Activated CD8-positive, alpha-beta T cell treated with anti-CD3 and anti-CD28 coated beads, Interleukin-2, amount 10 ng/mL, durations not matched to agents 7 days and 5 days (primary cell): ENCODE measurements at regions of chr18 and their contacts with region 1.

Region 1: GRCh38 chr18:59459369-59460079 is 100.5 kb upstream of the LMAN1 start:
- DNase-seq: no peak
- ATAC-seq: no peak
- H3K4me3 Mint-ChIP-seq: no peak overlapping the region
- H3K27ac Mint-ChIP-seq: no peak overlapping the region
- H3K4me1 Mint-ChIP-seq: no peaks in the 10 kb centered on the region
- H3K27me3 Mint-ChIP-seq: peaks cover 5% of the 10 kb centered on the region

Region 2: DNA sequence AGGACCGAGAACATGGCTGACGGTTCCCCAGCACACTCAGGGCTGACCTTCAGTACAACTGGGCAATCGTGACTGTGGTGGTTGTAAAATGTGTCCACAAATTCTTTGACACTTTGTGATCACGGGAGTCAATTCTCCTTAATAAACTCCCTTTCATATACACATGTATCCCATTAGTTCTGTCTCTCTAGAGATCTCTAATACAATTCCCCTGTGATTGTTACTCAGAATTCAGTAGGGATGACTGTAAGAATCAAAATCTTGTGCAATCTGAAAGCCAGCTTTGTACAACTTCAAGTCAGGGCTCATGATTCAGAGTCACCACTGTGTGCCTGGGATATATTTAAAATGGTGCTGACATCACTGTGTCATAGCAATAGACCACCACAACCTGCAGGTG is 11.0 kb before region 1 on chr18:
- CTCF ChIA-PET with region 1: interaction called, 10 read pairs
- POLR2A ChIA-PET with region 1: no interaction called
- DNase-seq: no peak
- ATAC-seq: no peak
- H3K4me3 Mint-ChIP-seq: no peak overlapping the region
- H3K27ac Mint-ChIP-seq: no peak overlapping the region
- H3K4me1 Mint-ChIP-seq: no peaks in the 10 kb centered on the region
- H3K27me3 Mint-ChIP-seq: no peaks in the 10 kb centered on the region

Region 3: GRCh38 chr18:59470561-59471121 is 11.1 kb after region 1 on chr18:
- CTCF ChIA-PET with region 1: interaction called, 11 read pairs
- POLR2A ChIA-PET with region 1: no interaction called
- DNase-seq: no peak
- ATAC-seq: no peak
- H3K4me3 Mint-ChIP-seq: no peak overlapping the region
- H3K27ac Mint-ChIP-seq: no peak overlapping the region
- H3K4me1 Mint-ChIP-seq: no peaks in the 10 kb centered on the region
- H3K27me3 Mint-ChIP-seq: peaks cover 2% of the 10 kb centered on the region